ENCODE measurements at regions of chr6 and their contacts with region 1.

Region 1: GRCh38 chr6:28929887-28930620 is 6.3 kb upstream of the TRIM27 start:
- DNase-seq: no peak
- ATAC-seq: no peak
- H3K4me3 ChIP-seq: no peak overlapping the region
- H3K27ac ChIP-seq: no peak overlapping the region
- H3K4me1 ChIP-seq: no peaks in the 10 kb centered on the region
- H3K27me3 ChIP-seq: no peaks in the 10 kb centered on the region
- CTCF ChIP-seq: no peak
- POLR2A ChIP-seq: no peak
- RAD21 ChIP-seq: no peak

Region 2: GRCh38 chr6:28953039-28953584 is 23.1 kb after region 1 on chr6:
- CTCF ChIA-PET with region 1: no interaction called
- POLR2A ChIA-PET with region 1: interaction called, 20 read pairs
- dilution Hi-C with region 1: no loop called
- in situ Hi-C with region 1: no loop called
- intact Hi-C with region 1: no loop called
- DNase-seq: peak; percentile 72
- ATAC-seq: peak; percentile 90
- H3K4me3 ChIP-seq: peak overlapping the region; percentile 63
- H3K27ac ChIP-seq: no peak overlapping the region
- H3K4me1 ChIP-seq: no peaks in the 10 kb centered on the region; the same call in 1 of the 2 replicates
- H3K27me3 ChIP-seq: peaks cover 2% of the 10 kb centered on the region; the same call in 1 of the 2 replicates
- CTCF ChIP-seq: no peak
- POLR2A ChIP-seq: no peak
- RAD21 ChIP-seq: no peak

Measured in IMR-90 (cell line).